ENCODE measurements at regions of chr19 and their contacts with region 1.

Region 1: DNA sequence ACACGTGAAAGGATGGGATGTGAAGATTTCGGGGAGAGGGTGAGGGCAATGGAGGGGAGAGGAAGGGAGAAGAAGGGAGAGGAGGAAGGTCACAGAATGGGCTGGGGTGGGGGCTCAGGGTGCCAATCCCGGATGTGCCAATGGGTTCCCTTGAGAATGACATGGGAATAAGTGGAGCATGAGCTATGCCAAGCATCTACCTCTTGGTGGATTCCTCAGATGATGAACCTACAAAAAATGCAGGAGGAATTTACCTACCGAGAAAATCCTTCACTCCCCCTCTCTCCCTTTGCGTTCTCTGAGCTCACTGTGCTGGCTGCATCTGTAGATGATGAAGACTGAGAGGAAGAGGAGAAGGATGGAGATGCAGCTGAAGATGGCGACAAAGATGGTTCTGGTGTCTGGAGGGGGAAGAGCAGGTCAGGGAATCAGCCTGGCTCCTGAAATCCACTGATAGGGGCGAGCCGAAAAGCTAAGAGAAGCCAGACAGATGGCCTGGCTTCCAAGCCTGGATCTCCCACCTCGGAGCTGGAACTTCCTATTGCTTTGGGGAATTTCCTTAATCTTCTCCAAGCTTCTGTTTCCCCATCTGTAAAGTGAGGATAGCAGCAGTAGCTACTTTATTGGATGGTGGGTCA is 21.6 kb downstream of the VSTM1 start:
- DNase-seq: no peak
- H3K4me3 ChIP-seq: no peak overlapping the region
- H3K4me3 Mint-ChIP-seq: no peak overlapping the region
- H3K27ac ChIP-seq: no peak overlapping the region
- H3K27ac Mint-ChIP-seq: no peak overlapping the region
- H3K4me1 ChIP-seq: peaks cover 5 to 8% of the 10 kb centered on the region in 2 donors
- H3K4me1 Mint-ChIP-seq: no peaks in the 10 kb centered on the region
- H3K27me3 ChIP-seq: no peaks in the 10 kb centered on the region
- H3K27me3 Mint-ChIP-seq: peaks cover 7 to 19% (median 17%) of the 10 kb centered on the region in 3 donors
- CTCF ChIP-seq: no peak

Region 2: DNA sequence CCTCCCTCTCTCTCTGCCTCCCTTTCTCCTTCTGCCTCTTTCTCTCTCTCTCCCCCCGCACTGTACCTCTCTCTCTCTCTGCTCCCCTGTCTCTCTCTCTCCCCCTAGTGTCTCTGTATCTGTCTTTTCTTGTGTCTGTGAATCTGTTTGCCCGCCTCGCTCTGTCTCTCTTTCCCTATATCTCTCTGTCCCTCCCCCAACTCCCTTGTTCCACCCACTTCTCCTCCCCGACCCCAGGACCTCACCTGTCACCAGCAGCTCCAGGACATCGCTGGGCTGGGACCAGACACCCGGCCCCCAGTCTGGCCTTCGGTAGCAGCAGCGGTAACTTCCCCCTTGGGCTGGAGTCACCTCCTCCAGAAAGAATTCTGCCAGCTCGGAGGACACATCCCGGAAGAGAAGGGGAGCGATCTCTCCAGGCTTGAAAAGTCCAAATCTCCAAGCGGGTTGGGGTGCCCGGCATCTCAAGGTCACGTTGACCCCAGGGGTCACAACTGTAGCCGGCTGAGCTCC is 54.6 kb after region 1 on chr19:
- intact Hi-C with region 1: loop called in 1 of 2 experiments (anchors 10 kb)
- DNase-seq: peak; percentile 40 to 58 (median 42)
- H3K4me3 ChIP-seq: peak overlapping the region; percentile 17 to 92 (median 26)
- H3K4me3 Mint-ChIP-seq: peak overlapping the region; percentile 81 to 96
- H3K27ac ChIP-seq: peak overlapping the region; percentile 49 to 80
- H3K27ac Mint-ChIP-seq: peak overlapping the region; percentile 87 to 94 (median 92)
- H3K4me1 ChIP-seq: peaks cover 69 to 75% of the 10 kb centered on the region in 2 donors
- H3K4me1 Mint-ChIP-seq: peaks cover 58% of the 10 kb centered on the region
- H3K27me3 ChIP-seq: no peaks in the 10 kb centered on the region
- H3K27me3 Mint-ChIP-seq: peaks cover 0 to 9% (median 3%) of the 10 kb centered on the region in 3 donors
- CTCF ChIP-seq: no peak

Region 3: DNA sequence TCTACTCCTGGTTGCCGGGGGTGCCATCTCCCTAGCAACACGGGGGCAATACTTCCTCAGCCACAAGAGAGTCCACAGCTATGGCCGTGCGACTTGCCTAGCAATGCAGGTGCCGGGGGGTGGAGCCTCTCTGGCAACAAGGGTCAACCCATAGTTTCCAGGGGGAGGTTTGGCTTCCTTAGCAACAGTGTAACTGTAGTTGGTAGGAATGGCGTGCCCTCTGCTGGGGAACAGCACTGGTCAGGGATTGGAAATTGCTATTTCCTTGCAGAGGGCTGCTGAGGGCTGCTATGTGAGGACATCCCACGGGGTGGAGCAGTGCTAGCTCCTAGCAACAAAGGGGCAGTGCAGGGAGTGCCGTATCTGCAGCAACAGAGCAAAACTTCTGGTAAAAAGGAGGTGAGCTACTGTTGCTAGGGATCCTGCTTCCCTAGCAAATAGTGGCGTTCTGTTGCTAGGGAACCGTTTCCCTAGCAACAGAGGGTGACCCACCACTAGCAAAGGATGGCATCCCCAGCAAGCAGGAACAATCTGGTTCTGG is 137.9 kb after region 1 on chr19:
- intact Hi-C with region 1: no loop called
- DNase-seq: peak; percentile 30 to 34 (median 31)
- H3K4me3 ChIP-seq: no peak overlapping the region
- H3K4me3 Mint-ChIP-seq: no peak overlapping the region
- H3K27ac ChIP-seq: no peak overlapping the region
- H3K27ac Mint-ChIP-seq: peak overlapping the region in 3 of 7 donors; percentile 46 to 78 (median 49)
- H3K4me1 ChIP-seq: no peaks in the 10 kb centered on the region
- H3K4me1 Mint-ChIP-seq: peaks cover 2% of the 10 kb centered on the region
- H3K27me3 ChIP-seq: no peaks in the 10 kb centered on the region
- H3K27me3 Mint-ChIP-seq: no peaks in the 10 kb centered on the region
- CTCF ChIP-seq: no peak